ENCODE measurements at regions of chr6 and their contacts with region 1.

Region 1: GRCh38 chr6:111997078-111997852 is 56.6 kb upstream of the CCN6 start:
- DNase-seq: peak; percentile 49
- ATAC-seq: peak; percentile 90
- H3K4me3 Mint-ChIP-seq: peak overlapping the region; percentile 42
- H3K27ac Mint-ChIP-seq: no peak overlapping the region
- H3K4me1 Mint-ChIP-seq: peaks cover 6% of the 10 kb centered on the region
- H3K27me3 Mint-ChIP-seq: peaks cover 2% of the 10 kb centered on the region
- CTCF ChIP-seq: no peak

Region 2: DNA sequence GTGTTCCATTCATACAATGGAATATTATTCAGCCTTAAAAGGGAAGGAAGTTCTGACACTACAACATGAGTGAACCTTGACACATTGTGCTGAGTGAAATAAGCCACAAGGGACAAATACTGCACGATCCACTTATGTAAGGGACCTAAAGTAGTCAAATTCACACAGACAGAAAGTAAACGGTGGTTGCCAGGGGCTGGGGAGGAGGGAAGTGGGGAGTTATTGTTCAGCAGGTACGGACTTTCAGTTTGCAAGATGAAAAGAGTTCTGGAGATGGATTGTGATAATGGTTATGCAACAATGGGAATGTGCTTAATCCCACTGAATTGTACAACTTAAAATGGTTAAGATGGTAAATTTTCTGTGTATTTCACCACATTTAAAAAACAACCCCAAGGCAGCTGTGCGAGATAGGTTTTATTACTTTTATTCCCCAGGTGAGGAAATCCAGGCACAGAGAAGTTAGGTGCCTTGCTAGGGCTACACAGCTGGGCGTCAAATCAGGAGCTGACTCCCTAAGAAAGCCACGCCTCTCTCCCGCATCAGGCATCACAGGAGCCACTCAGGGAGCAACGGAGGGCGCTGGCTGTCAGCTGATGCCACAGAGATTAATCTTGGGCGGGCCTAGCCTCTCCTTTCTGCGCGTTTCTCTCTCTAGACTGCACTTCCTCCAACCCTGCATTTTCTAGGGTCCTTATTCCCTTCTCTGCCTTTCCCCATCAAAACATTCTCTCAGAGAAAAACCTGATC is 382.3 kb before region 1 on chr6:
- CTCF ChIA-PET with region 1: no interaction called
- POLR2A ChIA-PET with region 1: no interaction called
- intact Hi-C with region 1: no loop called
- DNase-seq: no peak
- ATAC-seq: no peak
- H3K4me3 Mint-ChIP-seq: no peak overlapping the region
- H3K27ac Mint-ChIP-seq: no peak overlapping the region
- H3K4me1 Mint-ChIP-seq: no peaks in the 10 kb centered on the region
- H3K27me3 Mint-ChIP-seq: peaks cover 14% of the 10 kb centered on the region
- CTCF ChIP-seq: no peak

Region 3: DNA sequence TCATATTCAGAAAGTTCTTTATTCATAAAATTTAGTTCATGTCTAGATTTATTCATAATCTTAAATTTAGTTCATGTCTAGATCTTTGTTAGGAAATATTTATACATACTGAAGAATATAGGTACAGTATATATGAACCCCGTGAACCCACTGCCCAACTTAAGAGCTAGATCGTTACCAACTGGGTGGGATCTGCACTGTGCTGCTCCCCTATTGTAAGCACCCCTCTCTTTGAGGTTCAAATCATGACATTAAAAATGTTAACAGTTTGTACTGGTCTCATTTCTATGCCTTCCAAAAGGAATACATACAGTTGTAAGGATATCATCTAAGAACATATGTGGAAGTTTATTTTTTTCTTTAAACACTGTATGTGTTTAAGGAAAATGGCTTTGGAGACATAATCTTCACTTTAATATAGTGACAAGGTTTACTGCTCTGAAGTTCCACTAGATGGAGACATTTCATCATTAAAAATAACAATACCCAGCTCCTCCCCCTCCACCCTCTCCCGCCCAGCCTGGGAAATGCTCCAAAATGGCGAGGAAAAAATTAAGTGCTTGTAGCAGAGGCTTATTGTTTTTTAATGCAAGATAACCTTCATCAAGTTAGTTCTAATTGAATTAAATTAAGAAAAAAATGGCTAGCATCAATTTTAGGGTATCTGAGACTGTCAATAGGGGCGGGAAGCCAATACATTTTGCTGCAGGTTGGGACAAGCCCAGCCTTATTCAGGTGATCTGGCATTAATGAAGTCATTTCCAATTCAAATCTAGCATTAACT is 287.5 kb before region 1 on chr6:
- CTCF ChIA-PET with region 1: interaction called, 52 read pairs
- POLR2A ChIA-PET with region 1: interaction called, 5 read pairs
- intact Hi-C with region 1: loop called (anchors 1 kb)
- DNase-seq: no peak
- ATAC-seq: peak; percentile 97
- H3K4me3 Mint-ChIP-seq: peak overlapping the region; percentile 19
- H3K27ac Mint-ChIP-seq: no peak overlapping the region
- H3K4me1 Mint-ChIP-seq: peaks cover 4% of the 10 kb centered on the region
- H3K27me3 Mint-ChIP-seq: no peaks in the 10 kb centered on the region
- CTCF ChIP-seq: peak; percentile 44

Region 4: DNA sequence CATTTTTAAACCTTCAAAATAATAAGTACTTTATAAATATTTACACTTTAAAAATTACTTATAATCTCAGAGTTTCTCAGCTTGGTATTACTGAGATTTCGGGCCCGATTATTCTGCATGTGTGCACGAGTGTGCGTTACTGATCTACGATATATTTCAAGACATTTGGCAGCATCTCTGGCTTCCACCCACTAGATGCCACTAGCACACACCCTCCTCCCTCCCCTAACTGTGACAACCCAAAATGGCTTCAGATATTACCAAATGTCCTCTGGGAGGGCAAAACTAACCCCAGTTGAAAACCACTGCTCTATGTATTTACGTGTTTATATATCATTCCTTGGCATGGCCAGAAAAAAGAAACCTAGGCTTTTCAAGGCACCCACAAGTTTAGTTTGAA is 219.9 kb before region 1 on chr6:
- CTCF ChIA-PET with region 1: interaction called, 3 read pairs
- POLR2A ChIA-PET with region 1: no interaction called
- intact Hi-C with region 1: loop called (anchors 1 kb)
- DNase-seq: no peak
- ATAC-seq: peak; percentile 77
- H3K4me3 Mint-ChIP-seq: peak overlapping the region; percentile 28
- H3K27ac Mint-ChIP-seq: no peak overlapping the region
- H3K4me1 Mint-ChIP-seq: peaks cover 9% of the 10 kb centered on the region
- H3K27me3 Mint-ChIP-seq: no peaks in the 10 kb centered on the region
- CTCF ChIP-seq: no peak

Measured in activated B cell treated with CpG ODN at 0.5 μM for 24 hours (primary cell).